MCF 10A (cell line): ENCODE measurements at regions of chr3 and their contacts with region 1.

Region 1: DNA sequence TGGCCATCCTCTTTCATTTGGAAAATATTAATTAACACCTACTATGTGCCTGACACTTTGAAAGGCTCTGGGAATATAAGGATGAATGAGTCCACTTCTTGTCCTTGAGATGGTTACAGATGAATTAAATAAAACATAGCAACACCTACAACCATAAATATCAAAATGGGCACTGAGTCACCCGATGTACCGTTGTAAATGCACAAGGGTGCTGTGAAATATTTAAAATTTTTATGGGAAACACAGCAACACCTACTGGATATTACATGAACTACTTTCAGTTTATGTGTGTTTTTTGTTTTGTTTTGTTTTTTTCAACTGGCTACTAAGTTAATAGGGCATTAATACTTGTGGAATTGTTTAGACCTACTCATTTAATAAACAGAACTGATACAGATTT is 239.0 kb upstream of the NAALADL2 start:
- DNase-seq: peak; percentile 33
- H3K4me3 Mint-ChIP-seq: no peak overlapping the region
- H3K27ac Mint-ChIP-seq: no peak overlapping the region
- H3K4me1 Mint-ChIP-seq: no peaks in the 10 kb centered on the region
- H3K27me3 Mint-ChIP-seq: no peaks in the 10 kb centered on the region
- CTCF ChIP-seq: peak; percentile 25

Region 2: GRCh38 chr3:174153871-174154270 is 466.3 kb before region 1 on chr3:
- CTCF ChIA-PET with region 1: no interaction called
- POLR2A ChIA-PET with region 1: no interaction called
- intact Hi-C with region 1: no loop called
- DNase-seq: no peak
- H3K4me3 Mint-ChIP-seq: no peak overlapping the region
- H3K27ac Mint-ChIP-seq: no peak overlapping the region
- H3K4me1 Mint-ChIP-seq: no peaks in the 10 kb centered on the region
- H3K27me3 Mint-ChIP-seq: no peaks in the 10 kb centered on the region
- CTCF ChIP-seq: no peak

Region 3: GRCh38 chr3:174355505-174355904 is 264.6 kb before region 1 on chr3:
- CTCF ChIA-PET with region 1: no interaction called
- POLR2A ChIA-PET with region 1: no interaction called
- intact Hi-C with region 1: loop called (anchors 10 kb)
- DNase-seq: peak; percentile 61
- H3K4me3 Mint-ChIP-seq: no peak overlapping the region
- H3K27ac Mint-ChIP-seq: no peak overlapping the region
- H3K4me1 Mint-ChIP-seq: peaks cover 6% of the 10 kb centered on the region
- H3K27me3 Mint-ChIP-seq: no peaks in the 10 kb centered on the region
- CTCF ChIP-seq: peak; percentile 43